BJ (cell line): ENCODE measurements at regions of chr12 and their contacts with region 1.

Region 1: GRCh38 chr12:53352331-53353256 is 16.4 kb upstream of the SP7 start:
- DNase-seq: no peak
- H3K4me3 ChIP-seq: no peak overlapping the region
- H3K27me3 ChIP-seq: no peaks in the 10 kb centered on the region
- CTCF ChIP-seq: peak; percentile 83

Region 2: DNA sequence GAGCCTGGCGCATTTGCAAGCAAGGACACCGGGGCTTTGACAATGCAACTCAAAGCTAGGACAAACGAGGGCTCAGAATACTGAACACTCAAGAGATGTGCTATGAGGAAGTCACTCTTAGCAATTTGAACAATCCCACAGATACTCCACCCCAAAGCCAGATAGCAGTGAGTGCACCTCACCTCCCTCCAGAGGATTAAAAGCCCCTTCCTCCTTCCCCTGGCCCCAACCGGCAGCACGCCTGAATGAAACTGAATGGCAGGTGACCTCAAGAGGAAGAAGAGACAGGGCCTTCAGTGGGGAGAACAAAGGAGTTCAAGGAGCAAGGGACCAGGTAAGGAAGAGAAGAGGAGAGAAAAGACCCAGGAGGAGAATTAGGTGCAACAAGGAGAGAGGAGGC is 501.9 kb before region 1 on chr12:
- CTCF ChIA-PET with region 1: no interaction called
- POLR2A ChIA-PET with region 1: no interaction called
- DNase-seq: no peak
- H3K4me3 ChIP-seq: no peak overlapping the region
- H3K27me3 ChIP-seq: peaks cover 10% of the 10 kb centered on the region
- CTCF ChIP-seq: no peak

Region 3: GRCh38 chr12:52949413-52950331 is 402.9 kb before region 1 on chr12:
- CTCF ChIA-PET with region 1: no interaction called
- POLR2A ChIA-PET with region 1: no interaction called
- DNase-seq: peak; percentile 73
- H3K4me3 ChIP-seq: peak overlapping the region; percentile 75
- H3K27me3 ChIP-seq: no peaks in the 10 kb centered on the region
- CTCF ChIP-seq: no peak

Region 4: GRCh38 chr12:53327435-53328042 is 25.1 kb before region 1 on chr12:
- CTCF ChIA-PET with region 1: interaction called, 210 read pairs
- POLR2A ChIA-PET with region 1: interaction called, 3 read pairs
- DNase-seq: no peak
- H3K4me3 ChIP-seq: no peak overlapping the region
- H3K27me3 ChIP-seq: peaks cover 10% of the 10 kb centered on the region
- CTCF ChIP-seq: peak; percentile 37

Region 5: GRCh38 chr12:53380104-53380793 is 27.7 kb after region 1 on chr12 and contains the start of gene SP1:
- CTCF ChIA-PET with region 1: interaction called, 19 read pairs
- POLR2A ChIA-PET with region 1: no interaction called
- DNase-seq: no peak
- H3K4me3 ChIP-seq: peak within 1 kb of the TSS; percentile 59
- H3K27me3 ChIP-seq: no peaks in the 10 kb centered on the region
- CTCF ChIP-seq: no peak
- polyA plus RNA-seq, gene SP1: 44.4 and 58.2 TPM in 2 replicates

Region 6: DNA sequence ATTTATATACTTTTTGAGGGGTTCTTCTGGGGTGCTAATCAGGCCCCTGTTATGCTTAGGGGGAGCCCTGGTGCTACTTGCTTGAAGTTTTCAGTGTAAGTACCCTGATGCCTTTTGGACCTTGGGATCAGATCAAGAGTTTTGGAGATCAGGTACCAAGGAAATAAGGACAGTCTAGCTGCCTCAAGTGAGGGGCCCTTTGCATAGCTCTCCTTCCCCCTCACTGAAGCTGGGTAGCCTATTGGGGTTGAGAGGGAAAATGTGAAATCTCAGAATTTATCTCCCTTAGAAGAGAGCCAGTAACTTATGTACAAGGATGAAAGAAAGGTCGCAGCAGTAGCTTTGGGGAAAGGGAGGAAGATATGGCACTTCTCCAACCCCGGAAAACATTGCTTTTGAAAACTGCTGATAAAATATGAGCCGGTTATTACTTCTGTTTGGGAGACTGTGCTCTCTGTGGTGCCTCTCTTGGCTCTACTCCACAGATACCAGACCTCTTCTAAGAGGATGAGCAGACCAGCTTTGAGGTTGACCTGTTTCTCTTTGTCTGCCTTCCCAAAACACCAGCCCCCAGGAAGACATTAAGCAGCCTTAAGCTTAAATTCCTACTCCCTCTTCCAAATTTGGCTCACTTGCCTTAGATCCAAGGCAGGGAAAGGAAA is 62.3 kb after region 1 on chr12:
- CTCF ChIA-PET with region 1: interaction called, 163 read pairs
- POLR2A ChIA-PET with region 1: no interaction called
- DNase-seq: no peak
- H3K4me3 ChIP-seq: no peak overlapping the region
- H3K27me3 ChIP-seq: no peaks in the 10 kb centered on the region
- CTCF ChIP-seq: no peak

Region 7: DNA sequence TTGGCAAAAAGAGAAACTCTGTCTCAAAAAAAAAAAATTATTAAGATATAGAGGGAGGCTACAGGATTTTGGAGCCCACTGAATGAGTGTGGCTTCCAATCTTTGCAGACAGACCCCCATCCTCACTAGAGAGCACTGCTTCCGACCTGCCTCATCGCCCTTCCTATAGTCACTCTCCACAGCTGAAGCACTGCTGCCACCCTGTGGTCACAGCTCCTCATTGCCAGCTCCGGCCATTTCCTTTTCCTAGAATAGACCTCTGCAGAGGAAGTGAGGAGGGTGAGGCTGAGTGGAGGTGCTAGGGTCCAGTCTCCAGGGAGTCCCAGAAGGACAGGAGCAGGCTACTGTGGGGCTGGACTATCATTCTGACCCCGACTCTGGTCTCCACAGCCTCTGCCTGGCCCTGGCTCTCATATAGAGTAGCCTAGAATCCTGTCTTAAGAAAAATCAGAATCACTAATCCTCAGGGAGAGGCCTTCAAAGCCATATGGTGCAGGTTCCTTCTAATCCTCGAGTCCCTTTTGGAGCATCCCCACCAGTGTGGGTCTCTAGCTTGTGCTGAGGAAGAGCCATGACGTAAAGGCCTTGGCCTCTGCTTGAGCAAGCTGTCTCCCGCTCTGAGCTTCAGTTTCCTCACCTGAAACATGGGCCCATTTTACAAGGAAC is 156.1 kb after region 1 on chr12:
- CTCF ChIA-PET with region 1: interaction called, 17 read pairs
- POLR2A ChIA-PET with region 1: no interaction called
- DNase-seq: no peak
- H3K4me3 ChIP-seq: no peak overlapping the region
- H3K27me3 ChIP-seq: no peaks in the 10 kb centered on the region
- CTCF ChIP-seq: peak; percentile 94